Activated naive CD4-positive, alpha-beta T cell treated with anti-CD3 and anti-CD28 coated beads for 36 hours (primary cell): ENCODE measurements at regions of chr5 and their contacts with region 1.

Region 1: GRCh38 chr5:55923177-55923771 is 71.5 kb downstream of the IL6ST start:
- DNase-seq: peak; percentile 46
- H3K4me3 Mint-ChIP-seq: peak overlapping the region; percentile 78
- H3K27ac Mint-ChIP-seq: peak overlapping the region; percentile 64
- H3K4me1 Mint-ChIP-seq: peaks cover 21% of the 10 kb centered on the region
- H3K27me3 Mint-ChIP-seq: peaks cover 2% of the 10 kb centered on the region

Region 2: DNA sequence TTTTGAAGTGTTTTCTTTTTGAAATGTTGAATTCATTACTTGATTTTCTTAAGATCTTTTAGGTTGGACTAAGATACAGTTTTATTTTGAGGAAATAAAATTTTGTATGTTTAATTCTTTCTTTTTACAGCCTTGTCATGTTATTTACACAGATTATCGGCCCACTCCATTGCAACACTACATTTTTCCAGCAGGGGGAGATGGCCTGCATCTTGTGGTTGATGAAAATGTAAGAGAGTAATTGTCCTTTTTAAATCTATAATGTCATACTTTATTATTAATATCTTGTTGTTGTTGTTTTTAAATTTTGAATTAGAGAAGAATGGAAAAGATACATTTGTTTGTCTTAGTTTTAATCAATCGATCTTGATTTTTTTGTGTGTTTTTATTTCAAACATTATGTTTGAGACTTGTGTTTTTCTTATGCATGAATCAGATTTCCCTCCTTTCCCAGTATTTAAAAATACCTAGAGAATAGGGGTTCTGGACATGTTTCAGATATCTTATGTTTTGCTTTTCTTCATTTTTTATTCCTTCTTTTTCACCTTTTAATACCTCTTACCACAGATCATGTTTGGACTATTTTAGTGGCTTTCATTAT is 578.8 kb before region 1 on chr5:
- CTCF ChIA-PET with region 1: no interaction called
- intact Hi-C with region 1: loop called (anchors 5 kb)
- DNase-seq: peak; percentile 84
- H3K4me3 Mint-ChIP-seq: no peak overlapping the region
- H3K27ac Mint-ChIP-seq: no peak overlapping the region
- H3K4me1 Mint-ChIP-seq: peaks cover 7% of the 10 kb centered on the region
- H3K27me3 Mint-ChIP-seq: no peaks in the 10 kb centered on the region